ENCODE measurements at regions of chr12 and their contacts with region 1.

Region 1: DNA sequence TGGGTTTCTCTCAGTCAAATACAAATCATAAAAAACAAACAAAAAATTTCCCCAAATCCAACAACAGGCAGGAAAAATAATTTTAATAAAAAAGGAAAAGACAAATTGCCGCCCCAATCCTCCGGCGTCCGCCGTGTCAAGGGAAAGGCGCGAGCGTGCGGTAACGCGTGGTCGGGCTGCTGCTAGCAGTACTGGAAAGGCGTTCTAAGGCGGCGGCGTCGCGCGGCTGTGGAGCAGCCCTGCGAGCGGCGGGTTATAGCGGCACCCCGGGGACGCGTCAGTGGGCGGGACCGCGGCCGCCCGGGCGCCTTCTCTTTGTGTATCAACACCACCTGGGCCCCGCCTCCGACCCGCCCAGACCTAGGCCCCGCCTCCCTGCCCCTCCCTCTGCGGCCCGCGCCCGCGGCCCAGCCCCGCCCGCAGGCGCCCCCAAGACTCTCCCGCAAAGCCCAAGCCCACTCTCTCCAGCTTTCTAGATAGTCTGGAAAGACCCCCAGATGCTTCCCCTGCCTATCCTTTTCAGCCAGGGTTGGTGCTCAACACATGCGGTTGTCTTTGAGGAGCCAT is at the start of gene SLC38A2:
- DNase-seq: peak; percentile 71
- ATAC-seq: peak; percentile 83
- H3K4me3 ChIP-seq: peak within 1 kb of the TSS; percentile 80 to 84
- H3K27ac ChIP-seq: peak within 1 kb of the TSS; percentile 95
- H3K4me1 ChIP-seq: peaks cover 45 to 72% of the 10 kb centered on the region in 2 experiments
- H3K27me3 ChIP-seq: no peaks in the 10 kb centered on the region
- CTCF ChIP-seq: no peak
- POLR2A ChIP-seq: peak; percentile 99
- RAD21 ChIP-seq: peak; percentile 37
- total RNA-seq, gene SLC38A2: 1,049 TPM

Region 2: GRCh38 chr12:45518291-45519235 is 854.1 kb before region 1 on chr12:
- CTCF ChIA-PET with region 1: no interaction called
- POLR2A ChIA-PET with region 1: no interaction called
- RAD21 ChIA-PET with region 1: no interaction called
- intact Hi-C with region 1: no loop called
- DNase-seq: no peak
- ATAC-seq: no peak
- H3K4me3 ChIP-seq: no peak overlapping the region
- H3K27ac ChIP-seq: no peak overlapping the region
- H3K4me1 ChIP-seq: peaks cover 0 to 5% of the 10 kb centered on the region in 2 experiments; a peak in 1 of 4 replicates
- H3K27me3 ChIP-seq: no peaks in the 10 kb centered on the region
- CTCF ChIP-seq: no peak
- POLR2A ChIP-seq: no peak
- RAD21 ChIP-seq: no peak

Region 3: GRCh38 chr12:46382964-46383653 is 10.5 kb after region 1 on chr12:
- CTCF ChIA-PET with region 1: no interaction called
- POLR2A ChIA-PET with region 1: interaction called, 4 read pairs
- RAD21 ChIA-PET with region 1: no interaction called
- intact Hi-C with region 1: loop called (anchors 1 kb)
- DNase-seq: peak; percentile 94
- ATAC-seq: peak; percentile 85
- H3K4me3 ChIP-seq: peak overlapping the region; percentile 68 to 74
- H3K27ac ChIP-seq: peak overlapping the region; percentile 98
- H3K4me1 ChIP-seq: peaks cover 47 to 56% of the 10 kb centered on the region in 2 experiments
- H3K27me3 ChIP-seq: no peaks in the 10 kb centered on the region
- CTCF ChIP-seq: 0 out of 6 replicates have a peak, but pooled peaks of 1 of the 3 experiments have one; percentile 10
- POLR2A ChIP-seq: no peak
- RAD21 ChIP-seq: peak; percentile 31

Region 4: GRCh38 chr12:46442239-46442638 is 69.6 kb after region 1 on chr12:
- CTCF ChIA-PET with region 1: no interaction called
- POLR2A ChIA-PET with region 1: interaction called, 10 read pairs
- RAD21 ChIA-PET with region 1: no interaction called
- intact Hi-C with region 1: no loop called
- DNase-seq: no peak
- ATAC-seq: peak; percentile 68
- H3K4me3 ChIP-seq: peak overlapping the region in 1 of 2 experiments; percentile 21; a peak in 1 of 4 replicates
- H3K27ac ChIP-seq: peak overlapping the region; percentile 93
- H3K4me1 ChIP-seq: peaks cover 84 to 98% of the 10 kb centered on the region in 2 experiments
- H3K27me3 ChIP-seq: no peaks in the 10 kb centered on the region
- CTCF ChIP-seq: no peak
- POLR2A ChIP-seq: no peak
- RAD21 ChIP-seq: no peak

Region 5: GRCh38 chr12:46492471-46493351 is 120.1 kb after region 1 on chr12:
- CTCF ChIA-PET with region 1: no interaction called
- POLR2A ChIA-PET with region 1: interaction called, 9 read pairs
- RAD21 ChIA-PET with region 1: no interaction called
- intact Hi-C with region 1: loop called (anchors 5 kb)
- DNase-seq: peak; percentile 85
- ATAC-seq: peak; percentile 57
- H3K4me3 ChIP-seq: no peak overlapping the region
- H3K27ac ChIP-seq: peak overlapping the region; percentile 73
- H3K4me1 ChIP-seq: peaks cover 71 to 72% of the 10 kb centered on the region in 2 experiments
- H3K27me3 ChIP-seq: no peaks in the 10 kb centered on the region
- CTCF ChIP-seq: no peak
- POLR2A ChIP-seq: no peak
- RAD21 ChIP-seq: no peak

Region 6: DNA sequence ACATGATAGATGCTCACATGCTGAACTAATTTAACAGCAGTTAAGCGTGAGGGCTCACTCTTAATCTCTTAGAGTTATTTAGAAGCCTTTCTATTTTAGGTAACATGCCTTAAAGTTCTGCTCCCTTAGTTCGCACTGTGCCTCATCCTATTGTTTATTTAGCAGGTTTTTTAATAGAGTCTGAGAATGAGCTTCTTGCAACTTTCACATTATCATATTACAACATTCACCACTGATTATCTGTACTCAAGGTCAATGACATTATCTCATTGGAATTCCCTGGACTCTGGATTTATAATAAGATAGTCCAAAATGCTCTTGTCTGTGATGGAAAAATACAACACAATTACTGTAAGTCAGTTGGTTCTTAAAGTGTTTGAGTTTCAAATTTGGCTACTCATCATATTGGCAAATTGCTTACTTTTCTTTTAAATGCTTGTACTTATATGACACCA is 183.5 kb after region 1 on chr12:
- CTCF ChIA-PET with region 1: no interaction called
- POLR2A ChIA-PET with region 1: interaction called, 11 read pairs
- RAD21 ChIA-PET with region 1: interaction called in 1 of 2 experiments, 3 read pairs
- intact Hi-C with region 1: no loop called
- DNase-seq: peak; percentile 84
- ATAC-seq: peak; percentile 28
- H3K4me3 ChIP-seq: peak overlapping the region in 1 of 2 experiments; percentile 25; a peak in 2 of 4 replicates
- H3K27ac ChIP-seq: peak overlapping the region; percentile 91
- H3K4me1 ChIP-seq: peaks cover 84 to 91% of the 10 kb centered on the region in 2 experiments
- H3K27me3 ChIP-seq: no peaks in the 10 kb centered on the region
- CTCF ChIP-seq: no peak
- POLR2A ChIP-seq: no peak
- RAD21 ChIP-seq: peak; percentile 30; the same call in 1 of the 2 replicates

Region 7: DNA sequence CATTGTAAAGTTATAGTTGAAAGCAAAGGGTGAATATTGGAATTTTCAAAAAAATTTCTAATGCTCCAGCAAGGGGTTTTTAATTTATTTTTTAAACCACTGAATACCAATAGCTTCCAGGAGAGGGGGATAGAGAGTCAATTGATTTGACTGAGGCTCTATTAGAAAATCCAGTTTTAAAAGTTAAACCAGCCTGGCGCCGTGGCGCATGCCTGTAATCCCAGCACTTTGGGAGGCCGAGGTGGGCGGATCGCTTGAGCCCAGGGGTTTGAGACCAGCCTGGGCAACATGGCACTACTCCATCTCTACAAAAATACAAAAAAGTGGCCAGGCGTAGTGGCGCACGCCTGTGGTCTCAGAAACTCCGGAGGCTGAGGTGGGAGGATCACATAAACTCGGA is 303.1 kb after region 1 on chr12:
- CTCF ChIA-PET with region 1: no interaction called
- POLR2A ChIA-PET with region 1: no interaction called
- RAD21 ChIA-PET with region 1: no interaction called
- intact Hi-C with region 1: loop called (anchors 5 kb)
- DNase-seq: no peak
- ATAC-seq: peak; percentile 66
- H3K4me3 ChIP-seq: no peak overlapping the region
- H3K27ac ChIP-seq: peak overlapping the region; percentile 13; the same call in 1 of the 2 replicates
- H3K4me1 ChIP-seq: peaks cover 42 to 44% of the 10 kb centered on the region in 2 experiments
- H3K27me3 ChIP-seq: no peaks in the 10 kb centered on the region
- CTCF ChIP-seq: peak; percentile 44 to 61 (median 52); a peak in 5 of 6 replicates
- POLR2A ChIP-seq: no peak
- RAD21 ChIP-seq: peak; percentile 55